Ovary (tissue), 10 donors: ENCODE measurements at regions of chr11 and their contacts with region 1.

Region 1: DNA sequence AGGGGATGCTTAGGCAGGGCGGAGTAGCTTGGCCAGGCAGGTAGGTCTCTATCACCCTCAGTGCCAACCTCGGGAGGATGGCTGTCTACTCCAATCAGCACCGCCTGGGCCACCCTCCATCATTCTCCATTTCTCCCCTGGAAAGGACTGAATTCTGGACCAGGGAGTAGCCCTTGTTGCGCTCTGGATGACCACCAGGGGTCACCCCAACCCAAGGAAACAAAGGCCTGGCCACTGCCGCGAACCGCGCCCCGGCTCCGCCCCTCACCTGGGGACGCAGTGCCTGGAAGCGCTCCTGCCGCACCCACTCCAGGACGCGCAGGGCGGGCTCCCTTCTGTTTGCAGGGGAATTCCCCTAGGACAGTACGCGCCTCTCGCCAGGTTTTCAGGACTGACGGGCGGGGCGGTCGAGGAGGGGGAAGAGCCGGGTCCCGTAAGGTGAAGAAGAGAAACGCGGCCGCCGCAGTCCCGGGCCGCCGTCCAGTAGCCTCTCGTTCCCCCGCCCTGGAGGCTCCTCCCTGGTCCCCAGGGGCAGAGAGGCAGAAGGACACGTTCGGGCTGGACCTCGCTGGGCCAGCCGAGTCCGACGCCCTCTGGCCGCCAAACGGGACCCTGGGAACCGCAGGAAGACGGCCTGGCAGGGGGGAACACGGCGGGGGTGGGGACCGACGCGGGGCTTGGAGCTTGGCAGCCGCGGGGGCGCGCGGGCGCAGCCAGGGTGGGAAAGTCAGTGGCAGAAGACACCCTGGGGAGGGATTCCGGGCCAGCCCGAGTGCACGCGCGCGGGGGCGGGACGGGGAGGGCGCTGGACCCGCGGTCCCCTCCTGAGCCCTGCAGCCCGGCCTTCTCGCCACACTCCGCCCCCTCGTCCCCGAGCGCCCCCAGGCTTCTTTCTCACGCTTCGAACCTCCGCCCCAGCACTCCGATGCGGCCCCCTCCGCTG is 7.1 kb downstream of the SCN4B start:
- DNase-seq: peak; percentile 58 to 84 (median 78)
- H3K4me3 ChIP-seq: peak overlapping the region; percentile 50
- H3K27ac ChIP-seq: no peak overlapping the region
- H3K4me1 ChIP-seq: peaks cover 4% of the 10 kb centered on the region
- H3K27me3 ChIP-seq: no peaks in the 10 kb centered on the region
- CTCF ChIP-seq: peak; percentile 77 to 90 (median 84)
- EP300 ChIP-seq: no peak
- POLR2A ChIP-seq: no peak

Region 2: DNA sequence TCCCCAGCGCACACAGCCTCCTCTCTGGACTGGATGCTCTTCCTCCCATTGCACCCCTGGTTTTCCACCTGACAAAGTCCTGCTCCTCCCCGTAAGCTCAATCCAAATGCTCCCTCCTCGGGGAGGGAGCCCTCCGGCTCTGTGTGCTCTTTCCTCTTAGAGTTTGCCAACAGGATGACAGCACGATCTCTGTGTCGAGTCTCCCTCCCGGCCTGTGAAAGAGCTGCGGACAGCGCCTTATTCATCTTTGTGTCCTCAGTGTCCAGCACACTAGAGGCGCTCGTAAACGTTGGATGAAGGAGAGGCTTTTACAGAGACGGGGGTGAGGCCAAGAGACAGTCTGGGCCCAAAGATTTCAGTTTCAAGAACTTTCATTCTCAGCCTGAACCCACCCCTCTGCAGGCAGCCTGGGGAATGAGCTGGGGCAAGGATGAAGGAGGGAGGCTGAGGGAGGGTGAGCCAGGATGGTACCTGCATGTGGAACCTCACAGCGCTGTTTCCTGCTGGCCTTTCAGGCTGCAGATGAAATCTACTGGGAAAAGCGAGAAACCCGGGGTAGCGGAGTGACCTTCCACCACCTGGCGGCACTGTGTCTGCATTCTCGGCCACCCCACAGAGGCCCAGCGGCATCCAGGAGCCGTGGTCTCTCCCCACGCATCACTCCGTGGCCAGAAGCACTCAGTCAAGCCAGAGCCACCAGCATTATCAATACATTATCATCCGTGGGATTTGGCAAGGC is 77.2 kb before region 1 on chr11:
- intact Hi-C with region 1: no loop called
- DNase-seq: no peak
- H3K4me3 ChIP-seq: no peak overlapping the region
- H3K27ac ChIP-seq: no peak overlapping the region
- H3K4me1 ChIP-seq: no peaks in the 10 kb centered on the region
- H3K27me3 ChIP-seq: no peaks in the 10 kb centered on the region
- CTCF ChIP-seq: no peak
- EP300 ChIP-seq: no peak
- POLR2A ChIP-seq: no peak

Region 3: DNA sequence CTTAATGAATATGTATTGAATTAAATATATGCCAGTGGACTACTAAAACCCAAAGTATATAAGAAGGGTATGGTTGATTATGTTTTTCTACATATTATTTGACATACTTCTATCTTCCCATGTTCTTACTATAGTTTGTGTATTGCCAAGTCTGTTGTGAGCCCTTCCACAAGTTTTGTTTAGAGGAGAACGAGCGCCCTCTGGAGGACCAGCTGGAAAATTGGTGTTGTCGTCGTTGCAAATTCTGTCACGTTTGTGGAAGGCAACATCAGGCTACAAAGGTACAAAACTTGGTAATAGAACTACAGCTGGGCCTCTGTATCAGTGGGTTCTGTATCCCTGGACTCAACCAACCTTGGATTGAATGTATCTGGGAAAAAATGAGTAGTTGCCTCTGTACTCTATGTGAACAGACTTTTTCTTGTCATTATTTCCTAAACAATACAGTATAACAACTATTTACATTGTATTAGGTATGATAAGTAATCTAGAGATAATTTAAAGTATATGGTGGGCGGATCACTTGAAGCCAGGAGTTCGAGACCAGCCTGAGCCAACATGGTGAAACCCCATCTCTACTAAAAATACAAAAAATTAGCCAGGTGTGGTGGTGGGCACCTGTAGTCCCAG is 343.0 kb after region 1 on chr11:
- intact Hi-C with region 1: loop called in 1 of 4 experiments (anchors 10 kb)
- DNase-seq: peak; percentile 47 to 71 (median 65)
- H3K4me3 ChIP-seq: no peak overlapping the region
- H3K27ac ChIP-seq: no peak overlapping the region
- H3K4me1 ChIP-seq: no peaks in the 10 kb centered on the region
- H3K27me3 ChIP-seq: no peaks in the 10 kb centered on the region
- CTCF ChIP-seq: peak; percentile 41 to 73 (median 65)
- EP300 ChIP-seq: no peak
- POLR2A ChIP-seq: no peak